CD4-positive, alpha-beta memory T cell (primary cell): ENCODE measurements at regions of chr5 and their contacts with region 1.

Region 1: DNA sequence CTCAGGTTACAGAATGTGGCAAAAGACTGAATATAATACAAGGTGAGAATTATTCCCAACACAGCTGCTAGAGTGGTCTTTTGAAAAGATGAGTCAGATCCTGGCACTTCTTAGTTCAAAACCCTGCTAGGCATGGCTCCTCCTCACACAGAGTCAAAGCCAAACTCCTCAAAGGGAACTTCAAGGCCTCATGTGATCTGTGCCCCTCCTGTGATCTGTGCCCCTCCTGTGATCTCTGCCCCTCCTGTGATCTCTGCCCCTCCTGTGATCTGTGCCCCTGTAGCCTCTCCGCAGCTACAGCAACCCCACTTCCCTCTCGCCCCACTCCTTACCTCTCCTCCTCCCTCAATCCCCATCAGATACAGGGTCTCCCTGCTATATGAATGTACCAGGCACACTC is 525.5 kb upstream of the CCNG1 start:
- DNase-seq: no peak
- H3K4me3 ChIP-seq: no peak overlapping the region
- H3K4me3 Mint-ChIP-seq: no peak overlapping the region
- H3K27ac ChIP-seq: no peak overlapping the region
- H3K27ac Mint-ChIP-seq: no peak overlapping the region
- H3K4me1 ChIP-seq: no peaks in the 10 kb centered on the region
- H3K4me1 Mint-ChIP-seq: no peaks in the 10 kb centered on the region
- H3K27me3 ChIP-seq: no peaks in the 10 kb centered on the region
- H3K27me3 Mint-ChIP-seq: no peaks in the 10 kb centered on the region

Region 2: DNA sequence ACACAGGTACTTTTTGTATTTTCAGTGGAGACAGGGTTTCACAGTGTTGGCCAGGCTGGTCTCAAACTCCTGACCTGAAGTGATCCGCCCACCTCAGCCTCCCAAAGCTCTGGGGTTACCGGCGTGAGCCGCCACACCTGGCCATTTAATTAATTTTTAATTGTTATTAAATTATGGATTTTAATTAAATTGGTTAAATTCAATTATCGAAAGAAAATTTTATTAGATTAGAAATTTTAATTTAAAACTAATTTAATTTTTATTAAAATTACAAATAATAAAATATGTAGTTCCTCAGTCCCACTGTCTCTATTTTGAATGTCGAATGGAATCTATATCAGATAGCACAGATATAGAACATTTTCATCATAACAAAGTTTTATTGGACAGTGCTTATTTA is 427.8 kb before region 1 on chr5:
- CTCF ChIA-PET with region 1: no interaction called
- POLR2A ChIA-PET with region 1: no interaction called
- intact Hi-C with region 1: no loop called
- DNase-seq: no peak
- H3K4me3 ChIP-seq: no peak overlapping the region
- H3K4me3 Mint-ChIP-seq: no peak overlapping the region
- H3K27ac ChIP-seq: no peak overlapping the region
- H3K27ac Mint-ChIP-seq: no peak overlapping the region
- H3K4me1 ChIP-seq: no peaks in the 10 kb centered on the region
- H3K4me1 Mint-ChIP-seq: no peaks in the 10 kb centered on the region
- H3K27me3 ChIP-seq: no peaks in the 10 kb centered on the region
- H3K27me3 Mint-ChIP-seq: no peaks in the 10 kb centered on the region

Region 3: DNA sequence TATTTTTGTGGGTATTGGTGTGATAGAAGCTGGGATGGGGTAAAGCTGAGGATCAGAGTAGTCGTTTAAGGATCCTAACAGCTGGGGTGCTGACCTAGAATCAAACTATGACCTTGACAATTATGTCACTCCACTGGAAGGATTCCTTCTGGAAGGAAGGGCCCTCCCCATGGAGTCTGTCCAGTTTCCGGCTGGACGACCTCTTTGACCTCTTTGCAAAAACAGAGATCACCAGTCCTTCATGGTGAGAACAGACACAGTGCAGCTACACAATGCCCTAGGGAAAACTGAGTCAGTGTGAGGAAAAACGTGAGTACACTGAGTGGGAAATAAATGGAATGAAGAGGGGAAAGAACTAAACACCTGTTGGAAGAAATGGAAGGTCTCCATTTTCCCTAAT is 1039.2 kb after region 1 on chr5:
- CTCF ChIA-PET with region 1: no interaction called
- POLR2A ChIA-PET with region 1: no interaction called
- intact Hi-C with region 1: loop called (anchors 5 kb)
- DNase-seq: no peak
- H3K4me3 ChIP-seq: no peak overlapping the region
- H3K4me3 Mint-ChIP-seq: no peak overlapping the region
- H3K27ac ChIP-seq: no peak overlapping the region
- H3K27ac Mint-ChIP-seq: no peak overlapping the region
- H3K4me1 ChIP-seq: no peaks in the 10 kb centered on the region
- H3K4me1 Mint-ChIP-seq: no peaks in the 10 kb centered on the region
- H3K27me3 ChIP-seq: no peaks in the 10 kb centered on the region
- H3K27me3 Mint-ChIP-seq: no peaks in the 10 kb centered on the region